B cell (primary cell): ENCODE measurements at regions of chr22 and their contacts with region 1.

Region 1: DNA sequence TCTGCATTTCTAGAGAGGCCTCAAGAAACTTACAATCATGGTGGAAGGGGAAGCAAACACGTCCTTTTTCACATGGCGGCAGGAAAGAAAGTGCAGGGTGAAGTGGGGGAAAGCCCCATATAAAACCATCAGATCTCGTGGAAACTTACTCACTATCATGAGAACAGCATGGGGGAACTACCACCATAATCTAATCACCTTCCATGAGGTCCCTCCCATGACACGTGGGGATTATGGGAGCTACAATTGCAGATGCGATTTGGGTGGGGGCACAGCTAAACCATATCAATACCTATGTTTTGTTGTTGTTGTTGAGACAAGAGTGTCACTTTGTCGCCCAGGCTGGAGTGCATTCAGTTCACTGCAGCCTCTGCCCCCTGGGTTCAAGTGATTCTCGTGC is 29.9 kb downstream of the SFI1 start:
- DNase-seq: peak; percentile 53
- ATAC-seq: no peak
- H3K4me3 ChIP-seq: no peak overlapping the region
- H3K4me3 Mint-ChIP-seq: no peak overlapping the region
- H3K27ac ChIP-seq: no peak overlapping the region
- H3K27ac Mint-ChIP-seq: peak overlapping the region; percentile 63
- H3K4me1 ChIP-seq: no peaks in the 10 kb centered on the region
- H3K4me1 Mint-ChIP-seq: peaks cover 14% of the 10 kb centered on the region
- H3K27me3 ChIP-seq: no peaks in the 10 kb centered on the region
- H3K27me3 Mint-ChIP-seq: no peaks in the 10 kb centered on the region
- CTCF ChIP-seq: no peak

Region 2: DNA sequence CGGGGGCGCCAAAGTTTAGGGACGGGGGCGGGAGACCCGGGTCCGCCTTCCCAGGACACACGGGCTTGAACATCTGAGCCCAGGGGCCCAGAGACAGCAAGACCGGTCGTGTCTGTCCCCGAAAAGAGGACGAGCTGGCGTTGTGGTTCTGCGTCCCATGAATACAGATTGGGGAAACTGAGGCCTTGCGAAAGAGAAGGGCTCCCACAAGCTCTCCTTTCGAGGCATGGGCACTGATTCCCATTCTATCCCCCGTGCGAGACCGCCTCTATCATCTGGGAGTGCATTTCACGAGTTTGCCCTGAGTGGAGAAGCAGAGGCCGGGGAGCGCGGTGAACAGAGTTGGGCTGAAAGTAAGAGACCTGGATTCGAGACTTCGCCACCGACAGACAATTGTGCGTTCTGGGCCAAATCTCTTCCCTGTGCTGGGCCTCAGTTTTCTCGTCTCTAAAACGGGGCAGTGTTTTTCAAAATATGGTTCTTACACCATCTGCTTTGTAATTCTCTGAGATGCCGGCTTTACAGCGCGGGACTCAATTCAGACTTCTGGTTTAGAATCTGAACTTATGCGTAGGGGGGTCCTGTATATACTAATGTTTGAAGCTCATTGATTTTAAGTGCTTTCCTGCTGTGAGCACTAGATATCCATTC is 365.8 kb before region 1 on chr22:
- CTCF ChIA-PET with region 1: no interaction called
- POLR2A ChIA-PET with region 1: interaction called, 12 read pairs
- intact Hi-C with region 1: no loop called
- DNase-seq: no peak
- ATAC-seq: peak; percentile 29
- H3K4me3 ChIP-seq: peak overlapping the region; percentile 65 to 81 (median 74)
- H3K4me3 Mint-ChIP-seq: peak overlapping the region; percentile 95
- H3K27ac ChIP-seq: peak overlapping the region; percentile 82 to 83
- H3K27ac Mint-ChIP-seq: peak overlapping the region; percentile 95
- H3K4me1 ChIP-seq: peaks cover 19 to 24% of the 10 kb centered on the region in 2 donors
- H3K4me1 Mint-ChIP-seq: peaks cover 33% of the 10 kb centered on the region
- H3K27me3 ChIP-seq: peaks cover 0 to 2% (median 0%) of the 10 kb centered on the region in 4 experiments
- H3K27me3 Mint-ChIP-seq: no peaks in the 10 kb centered on the region
- CTCF ChIP-seq: no peak

Region 3: GRCh38 chr22:31477329-31477728 is 48.9 kb before region 1 on chr22:
- CTCF ChIA-PET with region 1: no interaction called
- POLR2A ChIA-PET with region 1: no interaction called
- intact Hi-C with region 1: loop called (anchors 10 kb)
- DNase-seq: peak; percentile 64
- ATAC-seq: peak; percentile 90
- H3K4me3 ChIP-seq: no peak overlapping the region
- H3K4me3 Mint-ChIP-seq: peak overlapping the region; percentile 44
- H3K27ac ChIP-seq: peak overlapping the region; percentile 17 to 52
- H3K27ac Mint-ChIP-seq: peak overlapping the region; percentile 79
- H3K4me1 ChIP-seq: peaks cover 13 to 17% of the 10 kb centered on the region in 2 donors
- H3K4me1 Mint-ChIP-seq: peaks cover 19% of the 10 kb centered on the region
- H3K27me3 ChIP-seq: no peaks in the 10 kb centered on the region
- H3K27me3 Mint-ChIP-seq: no peaks in the 10 kb centered on the region
- CTCF ChIP-seq: no peak

Region 4: DNA sequence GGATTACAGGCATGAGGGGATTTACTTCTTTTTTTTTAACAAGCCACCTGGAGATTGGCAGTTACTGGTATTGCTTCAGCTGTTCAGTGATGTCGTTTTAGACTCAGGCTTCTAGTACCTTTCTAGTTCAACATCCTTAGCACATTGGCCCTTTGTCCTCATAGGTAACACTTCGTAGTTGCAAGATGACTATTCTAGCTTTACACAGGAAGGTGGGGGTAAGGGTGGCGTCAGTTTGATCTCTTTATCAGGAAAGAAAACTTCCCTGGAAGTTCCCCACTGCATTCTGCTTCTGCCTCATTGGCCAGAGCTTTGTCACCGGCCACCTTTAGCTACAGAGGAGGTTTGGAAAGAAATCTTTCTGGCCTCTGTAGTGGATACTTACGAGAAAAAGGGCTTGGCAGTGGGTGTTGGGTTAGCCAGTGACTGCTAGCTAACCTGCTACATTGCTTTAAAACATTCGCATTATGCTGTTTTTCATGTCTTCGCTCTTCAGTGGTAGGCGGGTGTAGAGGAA is 10.8 kb after region 1 on chr22:
- CTCF ChIA-PET with region 1: no interaction called
- POLR2A ChIA-PET with region 1: no interaction called
- intact Hi-C with region 1: no loop called
- DNase-seq: no peak
- ATAC-seq: no peak
- H3K4me3 ChIP-seq: no peak overlapping the region
- H3K4me3 Mint-ChIP-seq: no peak overlapping the region
- H3K27ac ChIP-seq: no peak overlapping the region
- H3K27ac Mint-ChIP-seq: no peak overlapping the region
- H3K4me1 ChIP-seq: no peaks in the 10 kb centered on the region
- H3K4me1 Mint-ChIP-seq: no peaks in the 10 kb centered on the region
- H3K27me3 ChIP-seq: no peaks in the 10 kb centered on the region
- H3K27me3 Mint-ChIP-seq: no peaks in the 10 kb centered on the region
- CTCF ChIP-seq: no peak